Naive thymus-derived CD4-positive, alpha-beta T cell (primary cell): ENCODE measurements at regions of chr7 and their contacts with region 1.

Region 1: GRCh38 chr7:43582503-43583423 is at the start of gene STK17A:
- DNase-seq: peak; percentile 91 to 100 (median 95)
- ATAC-seq: peak; percentile 93
- H3K4me3 ChIP-seq: peak within 1 kb of the TSS; percentile 79
- H3K4me3 Mint-ChIP-seq: peak within 1 kb of the TSS; percentile 96 to 100 (median 98)
- H3K27ac ChIP-seq: peak within 1 kb of the TSS; percentile 96
- H3K27ac Mint-ChIP-seq: peak within 1 kb of the TSS; percentile 89 to 100 (median 95)
- H3K4me1 ChIP-seq: peaks cover 8 to 10% of the 10 kb centered on the region in 2 donors
- H3K4me1 Mint-ChIP-seq: peaks cover 10 to 33% (median 13%) of the 10 kb centered on the region in 7 donors
- H3K27me3 ChIP-seq: no peaks in the 10 kb centered on the region
- H3K27me3 Mint-ChIP-seq: peaks cover 0 to 22% (median 6%) of the 10 kb centered on the region in 5 donors
- total RNA-seq, gene STK17A: 71.3 to 132 (median 95.8) TPM

Region 2: GRCh38 chr7:43572516-43573049 is 10.2 kb before region 1 on chr7:
- CTCF ChIA-PET with region 1: interaction called, 15 read pairs
- POLR2A ChIA-PET with region 1: no interaction called
- intact Hi-C with region 1: no loop called
- DNase-seq: peak in 1 of 9 donors; percentile 34
- ATAC-seq: peak; percentile 95
- H3K4me3 ChIP-seq: no peak overlapping the region
- H3K4me3 Mint-ChIP-seq: peak overlapping the region in 1 of 10 donors; percentile 45
- H3K27ac ChIP-seq: no peak overlapping the region
- H3K27ac Mint-ChIP-seq: peak overlapping the region in 1 of 9 donors; percentile 58
- H3K4me1 ChIP-seq: no peaks in the 10 kb centered on the region
- H3K4me1 Mint-ChIP-seq: peaks cover 0 to 31% (median 5%) of the 10 kb centered on the region in 7 donors
- H3K27me3 ChIP-seq: no peaks in the 10 kb centered on the region
- H3K27me3 Mint-ChIP-seq: peaks cover 0 to 4% (median 0%) of the 10 kb centered on the region in 5 donors

Region 3: GRCh38 chr7:43631559-43631958 is 48.8 kb after region 1 on chr7:
- CTCF ChIA-PET with region 1: interaction called, 13 read pairs
- POLR2A ChIA-PET with region 1: interaction called, 10 read pairs
- intact Hi-C with region 1: no loop called
- DNase-seq: peak in 2 of 9 donors; percentile 36 to 42
- ATAC-seq: peak; percentile 54
- H3K4me3 ChIP-seq: no peak overlapping the region
- H3K4me3 Mint-ChIP-seq: peak overlapping the region; percentile 40 to 78 (median 68)
- H3K27ac ChIP-seq: peak overlapping the region; percentile 53
- H3K27ac Mint-ChIP-seq: peak overlapping the region in 8 of 9 donors; percentile 64 to 100 (median 92)
- H3K4me1 ChIP-seq: peaks cover 44 to 71% of the 10 kb centered on the region in 2 donors
- H3K4me1 Mint-ChIP-seq: peaks cover 49 to 94% (median 76%) of the 10 kb centered on the region in 7 donors
- H3K27me3 ChIP-seq: no peaks in the 10 kb centered on the region
- H3K27me3 Mint-ChIP-seq: no peaks in the 10 kb centered on the region

Region 4: DNA sequence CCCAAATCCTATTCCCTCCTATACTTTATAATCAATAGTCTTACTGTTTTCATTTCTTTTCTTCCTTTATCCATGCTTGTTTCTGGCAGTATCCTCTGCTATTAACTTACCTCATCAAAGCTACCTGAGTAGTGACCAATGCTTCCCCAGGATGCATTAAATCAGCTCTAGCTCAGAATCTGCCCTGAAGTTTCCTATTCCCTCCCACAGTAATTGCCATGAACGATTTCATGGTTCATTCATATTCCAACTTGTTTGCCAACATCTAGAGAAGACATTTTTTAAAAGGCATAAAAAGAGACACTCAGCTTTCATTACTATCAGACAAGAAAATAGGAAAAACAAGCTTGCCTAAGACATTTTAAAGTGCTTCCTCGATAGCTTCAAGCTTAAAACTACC is 104.2 kb after region 1 on chr7:
- CTCF ChIA-PET with region 1: interaction called, 19 read pairs
- POLR2A ChIA-PET with region 1: interaction called, 5 read pairs
- intact Hi-C with region 1: no loop called
- DNase-seq: no peak
- ATAC-seq: no peak
- H3K4me3 ChIP-seq: no peak overlapping the region
- H3K4me3 Mint-ChIP-seq: no peak overlapping the region
- H3K27ac ChIP-seq: no peak overlapping the region
- H3K27ac Mint-ChIP-seq: peak overlapping the region in 7 of 9 donors; percentile 2 to 69 (median 25)
- H3K4me1 ChIP-seq: peaks cover 6 to 25% of the 10 kb centered on the region in 2 donors
- H3K4me1 Mint-ChIP-seq: peaks cover 30 to 81% (median 43%) of the 10 kb centered on the region in 7 donors
- H3K27me3 ChIP-seq: no peaks in the 10 kb centered on the region
- H3K27me3 Mint-ChIP-seq: no peaks in the 10 kb centered on the region

Region 5: GRCh38 chr7:43729214-43729923 is 146.6 kb after region 1 on chr7 and contains the start of gene COA1:
- CTCF ChIA-PET with region 1: interaction called, 14 read pairs
- POLR2A ChIA-PET with region 1: interaction called, 18 read pairs
- intact Hi-C with region 1: loop called (anchors 1 kb)
- DNase-seq: peak; percentile 61 to 85 (median 81)
- ATAC-seq: peak; percentile 98
- H3K4me3 ChIP-seq: peak within 1 kb of the TSS; percentile 91
- H3K4me3 Mint-ChIP-seq: peak within 1 kb of the TSS; percentile 81 to 96 (median 94)
- H3K27ac ChIP-seq: peak within 1 kb of the TSS; percentile 76
- H3K27ac Mint-ChIP-seq: peak within 1 kb of the TSS; percentile 75 to 95 (median 90)
- H3K4me1 ChIP-seq: peaks cover 15 to 24% of the 10 kb centered on the region in 2 donors
- H3K4me1 Mint-ChIP-seq: peaks cover 27 to 57% (median 38%) of the 10 kb centered on the region in 7 donors
- H3K27me3 ChIP-seq: no peaks in the 10 kb centered on the region
- H3K27me3 Mint-ChIP-seq: peaks cover 0 to 4% (median 0%) of the 10 kb centered on the region in 5 donors
- total RNA-seq, gene COA1: 51.3 to 73.3 (median 64.6) TPM

Region 6: GRCh38 chr7:43925984-43926797 is 343.4 kb after region 1 on chr7 and contains the start of gene UBE2D4:
- CTCF ChIA-PET with region 1: no interaction called
- POLR2A ChIA-PET with region 1: interaction called, 4 read pairs
- intact Hi-C with region 1: loop called (anchors 5 kb)
- DNase-seq: peak; percentile 83 to 93 (median 91)
- ATAC-seq: peak; percentile 93
- H3K4me3 ChIP-seq: peak within 1 kb of the TSS; percentile 73
- H3K4me3 Mint-ChIP-seq: peak within 1 kb of the TSS; percentile 90 to 95 (median 93)
- H3K27ac ChIP-seq: peak within 1 kb of the TSS; percentile 94
- H3K27ac Mint-ChIP-seq: peak within 1 kb of the TSS; percentile 92 to 98 (median 96)
- H3K4me1 ChIP-seq: peaks cover 6 to 16% of the 10 kb centered on the region in 2 donors
- H3K4me1 Mint-ChIP-seq: peaks cover 20 to 58% (median 40%) of the 10 kb centered on the region in 7 donors
- H3K27me3 ChIP-seq: no peaks in the 10 kb centered on the region
- H3K27me3 Mint-ChIP-seq: no peaks in the 10 kb centered on the region
- total RNA-seq, gene UBE2D4: 6.3 to 13.9 (median 9.6) TPM